PC-3 (cell line): ENCODE measurements at regions of chr21 and their contacts with region 1.

Region 1: DNA sequence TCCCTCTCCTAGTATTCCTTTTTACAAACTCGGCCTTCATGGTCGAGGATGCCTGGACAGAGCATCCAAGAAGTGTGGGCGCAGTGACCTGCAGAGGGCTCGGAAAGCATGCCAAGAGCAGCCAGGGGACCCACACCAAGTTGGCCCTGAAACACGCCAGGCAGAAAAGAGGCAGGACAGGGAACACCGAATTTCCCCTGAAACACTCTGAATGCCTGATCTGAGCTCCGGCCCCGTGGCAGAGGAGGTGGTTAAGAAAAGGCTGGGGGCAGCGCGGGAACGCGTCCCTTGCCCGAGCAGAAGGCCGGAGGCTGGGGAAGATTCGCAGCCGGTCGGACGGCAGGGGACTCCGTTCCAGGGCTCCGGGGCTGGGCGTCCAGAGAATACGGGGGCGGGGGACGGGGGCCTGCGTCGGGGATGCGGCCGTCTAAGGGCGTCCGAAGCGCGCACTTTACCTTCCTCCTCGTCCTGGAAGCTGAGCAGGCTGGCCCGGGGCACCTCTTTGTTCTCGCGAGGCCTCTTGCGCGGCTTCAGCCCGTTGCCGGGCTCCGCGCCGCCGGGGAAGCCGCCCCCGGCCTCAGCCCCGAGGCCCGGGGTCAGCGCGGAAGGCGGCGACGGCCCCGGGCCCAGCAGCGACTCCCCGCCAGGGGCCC is 558 bp downstream of the PAXBP1 start:
- DNase-seq: peak; percentile 50
- ATAC-seq: peak; percentile 33
- H3K4me3 ChIP-seq: peak overlapping the region; percentile 93
- H3K27ac ChIP-seq: peak overlapping the region; percentile 67
- H3K4me1 ChIP-seq: peaks cover 26% of the 10 kb centered on the region
- H3K27me3 ChIP-seq: no peaks in the 10 kb centered on the region
- CTCF ChIP-seq: no peak

Region 2: GRCh38 chr21:32612075-32612998 is 158.7 kb before region 1 on chr21 and contains the start of gene CFAP298:
- CTCF ChIA-PET with region 1: no interaction called
- POLR2A ChIA-PET with region 1: interaction called, 11 read pairs
- intact Hi-C with region 1: no loop called
- DNase-seq: peak; percentile 89
- ATAC-seq: peak; percentile 89
- H3K4me3 ChIP-seq: peak within 1 kb of the TSS; percentile 97
- H3K27ac ChIP-seq: peak within 1 kb of the TSS; percentile 88
- H3K4me1 ChIP-seq: peaks cover 5% of the 10 kb centered on the region; the same call in 1 of the 2 replicates
- H3K27me3 ChIP-seq: no peaks in the 10 kb centered on the region
- CTCF ChIP-seq: no peak
- total RNA-seq, gene CFAP298: 96.0 and 98.6 TPM in 2 replicates

Region 3: GRCh38 chr21:32794644-32795079 is 23.7 kb after region 1 on chr21:
- CTCF ChIA-PET with region 1: no interaction called
- POLR2A ChIA-PET with region 1: no interaction called
- intact Hi-C with region 1: no loop called
- DNase-seq: no peak
- ATAC-seq: no peak
- H3K4me3 ChIP-seq: no peak overlapping the region
- H3K27ac ChIP-seq: no peak overlapping the region
- H3K4me1 ChIP-seq: no peaks in the 10 kb centered on the region
- H3K27me3 ChIP-seq: peaks cover 44% of the 10 kb centered on the region
- CTCF ChIP-seq: no peak